Caco-2 (cell line): ENCODE measurements at regions of chr5 and their contacts with region 1.

Region 1: GRCh38 chr5:126776497-126777256 is at the start of gene LMNB1:
- DNase-seq: peak; percentile 98 to 99
- H3K4me3 ChIP-seq: peak within 1 kb of the TSS; percentile 92
- H3K4me3 Mint-ChIP-seq: peak within 1 kb of the TSS; percentile 99
- H3K27ac Mint-ChIP-seq: peak within 1 kb of the TSS; percentile 96
- H3K4me1 ChIP-seq: peaks cover 15% of the 10 kb centered on the region
- H3K4me1 Mint-ChIP-seq: peaks cover 6% of the 10 kb centered on the region
- H3K27me3 ChIP-seq: no peaks in the 10 kb centered on the region
- H3K27me3 Mint-ChIP-seq: no peaks in the 10 kb centered on the region
- CTCF ChIP-seq: no peak
- total RNA-seq, gene LMNB1: 143 and 152 TPM in 2 replicates

Region 2: GRCh38 chr5:126594676-126595485 is 181.8 kb before region 1 on chr5 and contains the start of gene ALDH7A1:
- CTCF ChIA-PET with region 1: interaction called, 5 read pairs
- POLR2A ChIA-PET with region 1: no interaction called
- intact Hi-C with region 1: loop called (anchors 1 kb)
- DNase-seq: peak; percentile 97 to 98
- H3K4me3 ChIP-seq: peak within 1 kb of the TSS; percentile 66
- H3K4me3 Mint-ChIP-seq: peak within 1 kb of the TSS; percentile 93
- H3K27ac Mint-ChIP-seq: peak within 1 kb of the TSS; percentile 91
- H3K4me1 ChIP-seq: peaks cover 20% of the 10 kb centered on the region
- H3K4me1 Mint-ChIP-seq: peaks cover 22% of the 10 kb centered on the region
- H3K27me3 ChIP-seq: no peaks in the 10 kb centered on the region
- H3K27me3 Mint-ChIP-seq: no peaks in the 10 kb centered on the region
- CTCF ChIP-seq: peak; percentile 27 to 77
- total RNA-seq, gene ALDH7A1: 192 and 204 TPM in 2 replicates

Region 3: DNA sequence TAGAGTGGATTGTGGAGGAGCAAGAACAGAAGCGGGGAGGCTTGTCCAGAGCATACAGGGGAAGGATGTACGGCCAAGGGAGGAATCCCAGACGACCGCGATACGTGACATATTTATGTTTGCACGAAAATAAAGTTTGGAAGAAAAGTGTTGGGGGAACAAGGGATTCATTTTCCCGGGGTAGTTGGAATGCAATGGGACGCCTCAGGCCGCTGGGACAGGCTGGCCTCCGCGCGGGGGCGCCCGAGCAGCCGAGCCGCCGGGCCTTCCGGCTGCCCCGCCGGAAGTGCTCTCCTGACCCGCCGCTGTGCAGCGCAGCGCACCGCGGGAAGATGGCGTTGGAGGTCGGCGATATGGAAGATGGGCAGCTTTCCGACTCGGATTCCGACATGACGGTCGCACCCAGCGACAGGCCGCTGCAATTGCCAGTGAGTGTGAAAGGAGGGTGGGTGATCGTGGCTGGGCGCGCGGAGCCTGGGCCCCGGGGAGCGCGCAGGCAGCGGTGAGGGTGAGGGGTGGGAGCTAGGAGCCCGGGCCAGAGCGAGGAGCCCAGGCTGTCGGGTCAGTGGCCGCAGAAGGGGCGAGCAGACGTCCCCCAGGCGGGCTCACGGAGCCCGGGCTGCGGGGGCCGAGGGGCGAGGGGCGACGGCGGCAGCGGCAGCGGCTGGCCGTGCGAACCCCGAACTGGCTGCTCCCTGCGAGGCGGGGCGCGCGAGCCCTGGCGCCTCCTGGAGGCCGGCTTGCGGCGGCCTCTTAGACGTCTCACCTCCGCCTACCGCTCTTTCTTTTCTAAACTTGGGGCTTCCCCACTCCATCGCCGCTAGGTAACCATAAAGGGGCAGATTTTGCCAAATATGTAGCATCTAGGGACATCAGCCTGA is 175.8 kb before region 1 on chr5 and contains the start of gene PHAX:
- CTCF ChIA-PET with region 1: interaction called, 6 read pairs
- POLR2A ChIA-PET with region 1: interaction called, 4 read pairs
- intact Hi-C with region 1: loop called (anchors 1 kb)
- DNase-seq: peak; percentile 77 to 89
- H3K4me3 ChIP-seq: peak within 1 kb of the TSS; percentile 100
- H3K4me3 Mint-ChIP-seq: peak within 1 kb of the TSS; percentile 72
- H3K27ac Mint-ChIP-seq: peak within 1 kb of the TSS; percentile 64
- H3K4me1 ChIP-seq: peaks cover 9% of the 10 kb centered on the region; the same call in 1 of the 2 replicates
- H3K4me1 Mint-ChIP-seq: peaks cover 18% of the 10 kb centered on the region
- H3K27me3 ChIP-seq: no peaks in the 10 kb centered on the region
- H3K27me3 Mint-ChIP-seq: no peaks in the 10 kb centered on the region
- CTCF ChIP-seq: peak; percentile 45 to 73
- total RNA-seq, gene PHAX: 38.7 and 41.3 TPM in 2 replicates

Region 4: DNA sequence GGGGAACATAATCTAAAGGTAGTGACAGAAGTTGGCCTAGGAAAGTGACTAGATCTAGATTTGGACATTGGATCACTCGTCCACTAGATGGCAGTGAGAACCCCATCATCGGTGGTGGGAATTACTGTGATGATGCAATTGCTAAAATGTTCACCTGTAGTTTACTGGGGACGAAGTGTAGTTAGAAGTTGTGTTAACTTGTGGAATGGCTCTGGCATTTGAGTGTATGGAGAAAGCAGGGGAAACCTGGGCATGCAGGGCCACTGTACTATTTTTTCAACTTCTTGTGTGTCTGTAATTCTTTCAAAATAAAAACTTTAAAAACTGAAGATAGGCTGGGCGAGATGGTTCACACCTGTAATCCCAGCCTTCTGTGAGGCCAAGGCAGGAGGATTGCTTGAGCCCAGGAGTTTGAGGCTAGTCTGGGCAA is 100.5 kb before region 1 on chr5:
- CTCF ChIA-PET with region 1: interaction called, 14 read pairs
- POLR2A ChIA-PET with region 1: interaction called, 3 read pairs
- intact Hi-C with region 1: loop called (anchors 1 kb)
- DNase-seq: peak; percentile 60 to 71
- H3K4me3 ChIP-seq: no peak overlapping the region
- H3K4me3 Mint-ChIP-seq: peak overlapping the region; percentile 18
- H3K27ac Mint-ChIP-seq: peak overlapping the region; percentile 40
- H3K4me1 ChIP-seq: no peaks in the 10 kb centered on the region
- H3K4me1 Mint-ChIP-seq: peaks cover 7% of the 10 kb centered on the region
- H3K27me3 ChIP-seq: no peaks in the 10 kb centered on the region
- H3K27me3 Mint-ChIP-seq: no peaks in the 10 kb centered on the region
- CTCF ChIP-seq: peak; percentile 78 to 85

Region 5: DNA sequence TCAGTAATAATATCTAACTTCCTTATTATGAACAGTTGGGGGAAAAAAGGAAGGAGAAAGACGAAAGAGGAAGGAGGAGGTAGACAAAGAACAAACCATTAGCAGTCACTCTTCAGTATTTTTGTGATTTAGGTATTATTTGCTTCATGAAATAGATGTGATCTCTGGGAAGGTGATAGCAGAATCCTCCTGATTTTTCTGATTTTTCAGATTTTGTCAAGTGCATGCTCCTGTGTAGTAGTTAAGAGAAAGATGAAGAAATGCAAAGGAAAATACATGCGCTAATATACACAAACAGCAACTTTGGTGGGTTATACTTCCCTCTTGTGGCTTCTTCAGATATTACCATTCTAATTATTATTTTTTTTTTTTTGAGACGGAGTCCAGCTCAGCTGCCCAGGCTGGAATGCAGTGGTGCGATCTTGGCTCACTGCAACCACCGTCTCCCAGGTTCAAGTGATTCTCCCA is 31.9 kb after region 1 on chr5:
- CTCF ChIA-PET with region 1: interaction called, 9 read pairs
- POLR2A ChIA-PET with region 1: no interaction called
- intact Hi-C with region 1: loop called (anchors 2 kb)
- DNase-seq: peak in 1 of 2 experiments; percentile 35
- H3K4me3 ChIP-seq: no peak overlapping the region
- H3K4me3 Mint-ChIP-seq: no peak overlapping the region
- H3K27ac Mint-ChIP-seq: no peak overlapping the region
- H3K4me1 ChIP-seq: no peaks in the 10 kb centered on the region
- H3K4me1 Mint-ChIP-seq: no peaks in the 10 kb centered on the region
- H3K27me3 ChIP-seq: no peaks in the 10 kb centered on the region
- H3K27me3 Mint-ChIP-seq: no peaks in the 10 kb centered on the region
- CTCF ChIP-seq: peak; percentile 43 to 49

Region 6: DNA sequence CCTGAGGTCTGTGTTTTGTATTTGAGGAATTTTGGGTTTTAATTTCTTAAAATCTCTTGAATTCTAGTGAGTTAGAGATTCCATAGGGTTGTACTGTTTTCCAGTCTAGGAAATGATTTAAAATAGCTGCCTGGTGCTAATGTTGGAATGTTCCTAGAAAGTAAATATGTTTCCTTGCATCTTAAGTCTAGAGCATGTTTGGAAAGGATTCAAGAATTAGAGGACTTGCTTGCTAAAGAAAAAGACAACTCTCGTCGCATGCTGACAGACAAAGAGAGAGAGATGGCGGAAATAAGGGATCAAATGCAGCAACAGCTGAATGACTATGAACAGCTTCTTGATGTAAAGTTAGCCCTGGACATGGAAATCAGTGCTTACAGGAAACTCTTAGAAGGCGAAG is 42.1 kb after region 1 on chr5:
- CTCF ChIA-PET with region 1: no interaction called
- POLR2A ChIA-PET with region 1: no interaction called
- intact Hi-C with region 1: no loop called
- DNase-seq: no peak
- H3K4me3 ChIP-seq: no peak overlapping the region
- H3K4me3 Mint-ChIP-seq: no peak overlapping the region
- H3K27ac Mint-ChIP-seq: no peak overlapping the region
- H3K4me1 ChIP-seq: no peaks in the 10 kb centered on the region
- H3K4me1 Mint-ChIP-seq: no peaks in the 10 kb centered on the region
- H3K27me3 ChIP-seq: no peaks in the 10 kb centered on the region
- H3K27me3 Mint-ChIP-seq: no peaks in the 10 kb centered on the region
- CTCF ChIP-seq: no peak